Activated naive CD4-positive, alpha-beta T cell treated with anti-CD3 and anti-CD28 coated beads for 36 hours (primary cell): ENCODE measurements at regions of chr2 and their contacts with region 1.

Region 1: GRCh38 chr2:225002039-225002655 is 40.1 kb downstream of the DOCK10 start:
- DNase-seq: peak; percentile 84
- H3K4me3 Mint-ChIP-seq: peak overlapping the region; percentile 22
- H3K27ac Mint-ChIP-seq: peak overlapping the region; percentile 86
- H3K4me1 Mint-ChIP-seq: peaks cover 83% of the 10 kb centered on the region
- H3K27me3 Mint-ChIP-seq: no peaks in the 10 kb centered on the region

Region 2: GRCh38 chr2:224807153-224807964 is 194.8 kb before region 1 on chr2:
- CTCF ChIA-PET with region 1: no interaction called
- intact Hi-C with region 1: loop called (anchors 1 kb)
- DNase-seq: no peak
- H3K4me3 Mint-ChIP-seq: no peak overlapping the region
- H3K27ac Mint-ChIP-seq: peak overlapping the region; percentile 80
- H3K4me1 Mint-ChIP-seq: no peaks in the 10 kb centered on the region
- H3K27me3 Mint-ChIP-seq: no peaks in the 10 kb centered on the region

Region 3: DNA sequence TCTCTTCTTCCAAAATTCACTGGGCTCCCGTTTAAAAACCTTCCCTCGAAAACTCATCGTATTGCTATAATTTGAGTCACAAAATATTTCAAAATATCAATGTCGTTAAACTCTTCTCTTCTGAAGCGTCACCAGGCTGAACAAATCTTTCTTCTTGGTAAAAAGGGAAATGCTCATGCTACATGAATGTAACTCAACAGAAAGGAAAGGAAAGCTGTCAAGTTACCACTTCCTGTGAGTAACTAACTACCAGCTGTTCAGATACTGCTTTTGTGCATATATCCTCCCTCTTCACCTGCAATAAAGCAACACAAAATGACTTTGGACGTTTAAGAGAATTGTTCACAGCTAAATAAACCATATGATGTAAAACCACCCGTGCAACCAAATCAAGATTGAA is 55.3 kb before region 1 on chr2:
- CTCF ChIA-PET with region 1: interaction called, 34 read pairs
- intact Hi-C with region 1: loop called (anchors 1 kb)
- DNase-seq: no peak
- H3K4me3 Mint-ChIP-seq: peak overlapping the region; percentile 82
- H3K27ac Mint-ChIP-seq: peak overlapping the region; percentile 94
- H3K4me1 Mint-ChIP-seq: peaks cover 58% of the 10 kb centered on the region
- H3K27me3 Mint-ChIP-seq: no peaks in the 10 kb centered on the region

Region 4: DNA sequence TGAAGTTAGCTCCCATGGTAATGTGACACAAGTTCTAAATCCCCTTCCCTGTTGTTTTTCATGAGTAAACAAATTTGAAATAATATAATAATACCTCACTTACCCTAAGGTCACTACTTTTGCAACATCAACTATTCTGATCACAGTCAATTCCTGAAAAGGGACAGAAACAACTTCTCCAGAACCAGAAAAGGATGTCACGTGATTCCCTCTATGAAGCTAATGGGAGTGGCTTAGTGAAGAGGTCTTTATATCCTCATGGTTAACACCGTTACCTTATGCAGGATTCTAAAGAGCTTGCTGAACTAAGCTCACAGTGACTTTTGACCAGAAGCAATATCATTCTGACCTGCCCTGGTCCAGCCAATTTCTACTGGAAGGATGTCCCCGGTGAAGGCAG is 11.4 kb before region 1 on chr2:
- CTCF ChIA-PET with region 1: interaction called, 29 read pairs
- intact Hi-C with region 1: no loop called
- DNase-seq: no peak
- H3K4me3 Mint-ChIP-seq: no peak overlapping the region
- H3K27ac Mint-ChIP-seq: peak overlapping the region; percentile 26
- H3K4me1 Mint-ChIP-seq: peaks cover 86% of the 10 kb centered on the region
- H3K27me3 Mint-ChIP-seq: no peaks in the 10 kb centered on the region

Region 5: GRCh38 chr2:225122583-225123486 is 120.7 kb after region 1 on chr2:
- CTCF ChIA-PET with region 1: interaction called, 3 read pairs
- intact Hi-C with region 1: loop called (anchors 2 kb)
- DNase-seq: peak; percentile 60
- H3K4me3 Mint-ChIP-seq: no peak overlapping the region
- H3K27ac Mint-ChIP-seq: no peak overlapping the region
- H3K4me1 Mint-ChIP-seq: no peaks in the 10 kb centered on the region
- H3K27me3 Mint-ChIP-seq: no peaks in the 10 kb centered on the region

Region 6: DNA sequence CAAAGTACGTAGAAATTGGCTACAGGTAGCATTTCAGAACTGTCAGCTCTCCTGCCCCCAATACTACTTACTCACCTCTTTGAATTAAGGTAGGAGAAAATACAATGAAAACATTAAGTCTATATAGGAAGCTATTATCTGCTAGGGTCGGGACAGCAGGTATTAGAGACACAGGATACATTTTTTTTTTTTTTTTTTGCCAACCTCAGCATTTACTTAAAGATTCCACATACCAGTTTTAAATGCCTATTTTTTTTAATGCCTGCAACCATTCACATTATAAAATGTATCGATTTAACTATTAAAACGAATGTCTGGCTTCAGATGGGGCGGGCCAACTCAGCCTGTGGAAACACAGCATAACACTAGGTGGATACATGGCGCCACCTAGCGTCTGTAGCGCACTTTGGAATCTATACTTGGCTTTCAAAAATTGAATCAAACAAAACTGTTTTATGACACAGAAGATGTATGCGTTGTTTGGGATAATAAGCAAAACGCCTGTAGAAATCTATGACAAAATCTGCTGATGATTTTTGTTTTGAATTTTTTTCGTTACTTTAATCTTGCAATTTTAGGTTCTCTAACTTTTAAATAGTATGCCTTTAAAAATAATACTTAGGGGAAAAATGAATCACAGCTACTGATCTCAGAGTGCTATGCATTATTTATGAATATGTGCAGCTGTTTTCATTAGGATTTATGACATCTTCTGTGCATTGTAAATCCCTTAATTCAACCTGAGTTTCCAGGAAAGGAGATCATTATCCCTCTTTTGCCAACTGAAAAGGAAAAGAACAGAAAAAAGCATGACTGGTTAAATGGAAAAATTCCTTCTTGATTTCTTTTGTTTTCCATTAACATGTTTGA is 658.4 kb after region 1 on chr2:
- CTCF ChIA-PET with region 1: interaction called, 5 read pairs
- intact Hi-C with region 1: loop called (anchors 1 kb)
- DNase-seq: peak; percentile 90
- H3K4me3 Mint-ChIP-seq: no peak overlapping the region
- H3K27ac Mint-ChIP-seq: no peak overlapping the region
- H3K4me1 Mint-ChIP-seq: no peaks in the 10 kb centered on the region
- H3K27me3 Mint-ChIP-seq: peaks cover 15% of the 10 kb centered on the region